ENCODE measurements at regions of chr1 and their contacts with region 1.

Region 1: DNA sequence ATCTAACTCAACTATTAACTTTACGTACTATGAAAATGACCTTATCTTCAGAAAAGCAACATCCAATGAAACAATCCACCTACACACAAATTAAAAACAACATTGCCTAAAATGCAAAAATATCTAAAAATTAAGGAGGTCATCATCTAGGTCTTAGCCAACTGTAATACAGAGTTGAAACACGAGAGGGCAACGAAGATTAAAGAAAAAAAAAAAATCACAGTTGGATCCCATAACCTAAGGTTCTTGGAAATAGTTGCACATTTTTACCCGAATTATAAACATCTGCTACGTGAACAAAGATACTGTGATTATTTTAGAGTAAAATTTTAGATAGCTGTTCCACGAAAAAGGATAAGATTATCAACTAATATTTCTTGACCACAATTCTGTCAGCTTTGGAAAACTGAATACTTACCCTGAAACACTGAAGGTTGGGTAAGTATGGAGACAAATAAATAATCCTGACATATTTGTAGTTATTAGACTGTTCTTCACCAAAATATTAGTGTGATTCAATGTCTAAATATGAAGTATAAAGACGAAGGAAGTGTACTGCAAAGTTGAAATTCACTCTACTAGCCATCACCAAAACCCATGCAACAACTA is 88.0 kb upstream of the AK4 start:
- DNase-seq: peak in 1 of 4 donors; percentile 50
- ATAC-seq: peak; percentile 45
- H3K4me3 ChIP-seq: no peak overlapping the region
- H3K27ac ChIP-seq: no peak overlapping the region
- H3K4me1 ChIP-seq: peaks cover 22 to 93% of the 10 kb centered on the region in 2 donors
- H3K27me3 ChIP-seq: no peaks in the 10 kb centered on the region
- CTCF ChIP-seq: peak; percentile 62 to 65

Region 2: DNA sequence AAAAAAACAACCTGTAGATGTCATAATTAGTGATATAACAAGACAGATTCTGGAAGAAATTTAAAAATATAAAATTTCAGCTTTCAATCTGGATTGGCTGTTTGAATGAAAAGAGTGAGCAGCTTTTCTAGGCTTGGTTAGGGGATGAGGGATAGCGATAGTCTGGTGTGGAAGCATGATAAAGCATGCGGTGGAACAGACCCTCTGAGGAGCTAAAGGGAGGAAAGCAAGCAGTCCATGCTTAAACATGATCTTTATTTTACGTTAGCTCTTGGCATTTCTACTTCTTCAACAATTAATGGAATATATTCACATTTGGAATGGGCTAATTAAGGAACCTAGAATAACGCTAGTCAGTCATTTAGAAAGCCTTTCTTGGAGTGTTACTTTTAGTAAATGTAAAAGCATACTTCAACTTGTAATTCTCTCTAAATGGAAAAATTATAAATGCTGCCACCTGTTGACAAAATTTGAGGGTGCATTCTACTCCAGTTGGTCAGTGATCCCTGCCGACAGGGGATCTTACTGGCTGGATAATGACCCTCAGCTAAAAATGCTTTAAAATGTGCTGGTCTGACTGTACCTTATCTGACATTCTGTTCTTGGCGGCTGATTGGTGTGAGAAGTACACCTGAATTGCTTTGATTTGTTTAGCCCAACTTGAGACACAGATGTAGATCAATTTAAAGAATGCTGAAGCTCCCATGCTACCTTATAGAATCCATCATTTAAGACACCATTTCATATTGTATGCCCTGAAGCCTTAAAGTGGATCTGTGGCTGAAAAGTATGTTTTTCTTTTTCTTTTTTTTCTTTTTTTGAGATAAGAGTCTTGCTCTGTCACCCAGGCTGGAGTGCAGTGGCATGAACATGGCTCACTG is 149.2 kb after region 1 on chr1:
- intact Hi-C with region 1: loop called in 1 of 2 experiments (anchors 10 kb)
- DNase-seq: peak in 2 of 4 donors; percentile 49 to 61
- ATAC-seq: peak; percentile 88
- H3K4me3 ChIP-seq: no peak overlapping the region
- H3K27ac ChIP-seq: no peak overlapping the region
- H3K4me1 ChIP-seq: no peaks in the 10 kb centered on the region
- H3K27me3 ChIP-seq: no peaks in the 10 kb centered on the region
- CTCF ChIP-seq: peak; percentile 70 to 71

Region 3: GRCh38 chr1:65357291-65357960 is 297.4 kb after region 1 on chr1:
- intact Hi-C with region 1: no loop called
- DNase-seq: no peak
- ATAC-seq: no peak
- H3K4me3 ChIP-seq: no peak overlapping the region
- H3K27ac ChIP-seq: no peak overlapping the region
- H3K4me1 ChIP-seq: no peaks in the 10 kb centered on the region
- H3K27me3 ChIP-seq: no peaks in the 10 kb centered on the region
- CTCF ChIP-seq: no peak